Mammary epithelial cell (primary cell): ENCODE measurements at regions of chr2 and their contacts with region 1.

Region 1: GRCh38 chr2:60707750-60708371 is 48.2 kb upstream of the PAPOLG start:
- DNase-seq: peak; percentile 24
- H3K4me3 ChIP-seq: no peak overlapping the region
- H3K27ac ChIP-seq: no peak overlapping the region
- H3K4me1 ChIP-seq: peaks cover 12% of the 10 kb centered on the region
- H3K27me3 ChIP-seq: no peaks in the 10 kb centered on the region
- CTCF ChIP-seq: peak; percentile 57 to 70

Region 2: DNA sequence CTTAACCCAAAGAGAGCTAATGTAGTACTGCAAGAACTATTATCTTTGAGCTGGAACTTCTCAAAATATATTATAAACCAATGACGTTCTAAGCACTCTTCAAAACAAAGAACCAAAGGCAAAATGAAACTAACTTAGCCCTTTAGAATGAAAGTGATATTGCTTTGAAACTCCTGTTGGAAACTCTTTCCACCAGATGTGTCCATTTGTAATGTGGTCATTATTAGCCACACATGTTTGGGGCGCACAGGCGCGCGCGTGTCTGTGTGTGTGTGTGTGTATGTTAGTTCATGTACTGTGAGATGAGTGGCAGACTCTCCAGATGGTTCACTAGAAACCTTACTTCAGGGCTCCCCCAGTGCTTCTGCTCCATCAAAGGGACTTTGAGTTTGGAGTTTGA is 477.8 kb before region 1 on chr2:
- CTCF ChIA-PET with region 1: interaction called, 23 read pairs
- dilution Hi-C with region 1: no loop called
- in situ Hi-C with region 1: no loop called
- intact Hi-C with region 1: no loop called
- DNase-seq: no peak
- H3K4me3 ChIP-seq: no peak overlapping the region
- H3K27ac ChIP-seq: no peak overlapping the region
- H3K4me1 ChIP-seq: no peaks in the 10 kb centered on the region
- H3K27me3 ChIP-seq: no peaks in the 10 kb centered on the region
- CTCF ChIP-seq: no peak

Region 3: GRCh38 chr2:60756191-60757041 is 48.6 kb after region 1 on chr2 and contains the start of gene PAPOLG:
- CTCF ChIA-PET with region 1: interaction called, 3 read pairs
- dilution Hi-C with region 1: no loop called
- in situ Hi-C with region 1: no loop called
- intact Hi-C with region 1: loop called (anchors 2 kb)
- DNase-seq: peak; percentile 89
- H3K4me3 ChIP-seq: peak within 1 kb of the TSS; percentile 62 to 93 (median 88)
- H3K27ac ChIP-seq: peak within 1 kb of the TSS; percentile 57
- H3K4me1 ChIP-seq: peaks cover 12% of the 10 kb centered on the region
- H3K27me3 ChIP-seq: no peaks in the 10 kb centered on the region
- CTCF ChIP-seq: no peak
- total RNA-seq, gene PAPOLG: 11.3 to 22.0 TPM

Region 4: DNA sequence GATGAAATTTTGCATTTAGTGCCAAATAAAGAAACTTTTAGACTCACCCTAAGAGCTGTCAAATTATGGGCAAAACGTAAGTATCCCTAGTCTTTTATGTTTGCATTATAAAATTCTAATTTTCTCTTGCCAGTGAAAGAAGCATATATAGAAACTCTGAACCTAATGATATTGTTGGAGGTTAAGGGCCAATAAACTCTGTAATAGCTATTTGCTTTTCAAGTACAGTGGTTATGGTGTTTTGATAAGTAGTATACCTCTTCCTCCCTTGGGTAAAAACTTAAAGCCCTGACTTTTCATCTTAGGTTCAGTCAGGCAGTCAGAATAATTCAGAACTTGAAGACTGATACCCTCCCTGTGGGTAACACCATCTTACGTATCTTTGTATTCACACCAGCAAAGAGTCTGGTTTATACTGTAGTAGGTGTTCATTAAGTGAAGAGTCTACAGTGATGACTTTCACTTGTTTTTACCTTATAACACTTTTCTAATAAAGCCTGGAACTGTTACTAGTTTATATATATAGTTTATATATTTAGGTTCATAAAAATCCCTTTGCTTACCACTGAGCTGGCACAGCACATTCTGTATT is 67.3 kb after region 1 on chr2:
- CTCF ChIA-PET with region 1: no interaction called
- dilution Hi-C with region 1: no loop called
- in situ Hi-C with region 1: no loop called
- intact Hi-C with region 1: no loop called
- DNase-seq: no peak
- H3K4me3 ChIP-seq: no peak overlapping the region
- H3K27ac ChIP-seq: no peak overlapping the region
- H3K4me1 ChIP-seq: no peaks in the 10 kb centered on the region
- H3K27me3 ChIP-seq: no peaks in the 10 kb centered on the region
- CTCF ChIP-seq: no peak